ENCODE measurements at regions of chr19 and their contacts with region 1.

Region 1: DNA sequence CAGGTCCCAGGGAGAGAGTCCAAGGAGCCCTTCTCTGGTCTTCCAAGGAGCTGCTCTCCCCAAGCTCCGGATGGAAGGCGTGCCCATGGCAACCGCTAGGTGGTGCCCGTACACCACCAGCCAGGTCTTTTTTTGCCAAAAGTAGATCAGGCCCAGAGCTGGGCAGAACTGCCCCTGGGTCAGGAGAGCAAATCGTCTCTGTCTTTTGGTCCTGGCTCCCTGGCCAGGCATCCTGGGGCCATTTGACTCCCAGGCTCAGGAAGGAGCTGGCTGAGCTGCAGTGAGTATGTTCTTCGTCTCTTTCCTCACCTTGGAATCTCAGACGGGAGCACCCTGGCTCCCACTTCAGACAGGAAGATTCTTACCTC is 24.6 kb upstream of the BCL3 start:
- DNase-seq: peak; percentile 73
- ATAC-seq: peak; percentile 96
- H3K4me3 ChIP-seq: no peak overlapping the region
- H3K27ac ChIP-seq: 0 out of 2 replicates have a peak overlapping the region, but pooled peaks have one; percentile 10
- H3K4me1 ChIP-seq: peaks cover 15% of the 10 kb centered on the region
- H3K27me3 ChIP-seq: no peaks in the 10 kb centered on the region
- CTCF ChIP-seq: peak; percentile 97
- POLR2A ChIP-seq: no peak
- RAD21 ChIP-seq: peak; percentile 98

Region 2: GRCh38 chr19:44757735-44758505 is 34.0 kb after region 1 on chr19:
- CTCF ChIA-PET with region 1: interaction called, 11 read pairs
- POLR2A ChIA-PET with region 1: interaction called, 3 read pairs
- dilution Hi-C with region 1: no loop called
- in situ Hi-C with region 1: no loop called
- intact Hi-C with region 1: loop called (anchors 5 kb)
- DNase-seq: peak; percentile 63
- ATAC-seq: peak; percentile 8
- H3K4me3 ChIP-seq: peak overlapping the region; percentile 15
- H3K27ac ChIP-seq: peak overlapping the region; percentile 30
- H3K4me1 ChIP-seq: peaks cover 45% of the 10 kb centered on the region
- H3K27me3 ChIP-seq: no peaks in the 10 kb centered on the region
- CTCF ChIP-seq: 0 out of 2 replicates have a peak, but pooled peaks have one; percentile 15
- POLR2A ChIP-seq: no peak
- RAD21 ChIP-seq: no peak

Region 3: GRCh38 chr19:44764975-44765948 is 41.3 kb after region 1 on chr19:
- CTCF ChIA-PET with region 1: interaction called, 71 read pairs
- POLR2A ChIA-PET with region 1: no interaction called
- dilution Hi-C with region 1: no loop called
- in situ Hi-C with region 1: loop called (anchors 5 kb)
- intact Hi-C with region 1: loop called (anchors 1 kb)
- DNase-seq: no peak
- ATAC-seq: no peak
- H3K4me3 ChIP-seq: no peak overlapping the region
- H3K27ac ChIP-seq: no peak overlapping the region
- H3K4me1 ChIP-seq: peaks cover 3% of the 10 kb centered on the region
- H3K27me3 ChIP-seq: no peaks in the 10 kb centered on the region
- CTCF ChIP-seq: no peak
- POLR2A ChIP-seq: no peak
- RAD21 ChIP-seq: no peak

Region 4: DNA sequence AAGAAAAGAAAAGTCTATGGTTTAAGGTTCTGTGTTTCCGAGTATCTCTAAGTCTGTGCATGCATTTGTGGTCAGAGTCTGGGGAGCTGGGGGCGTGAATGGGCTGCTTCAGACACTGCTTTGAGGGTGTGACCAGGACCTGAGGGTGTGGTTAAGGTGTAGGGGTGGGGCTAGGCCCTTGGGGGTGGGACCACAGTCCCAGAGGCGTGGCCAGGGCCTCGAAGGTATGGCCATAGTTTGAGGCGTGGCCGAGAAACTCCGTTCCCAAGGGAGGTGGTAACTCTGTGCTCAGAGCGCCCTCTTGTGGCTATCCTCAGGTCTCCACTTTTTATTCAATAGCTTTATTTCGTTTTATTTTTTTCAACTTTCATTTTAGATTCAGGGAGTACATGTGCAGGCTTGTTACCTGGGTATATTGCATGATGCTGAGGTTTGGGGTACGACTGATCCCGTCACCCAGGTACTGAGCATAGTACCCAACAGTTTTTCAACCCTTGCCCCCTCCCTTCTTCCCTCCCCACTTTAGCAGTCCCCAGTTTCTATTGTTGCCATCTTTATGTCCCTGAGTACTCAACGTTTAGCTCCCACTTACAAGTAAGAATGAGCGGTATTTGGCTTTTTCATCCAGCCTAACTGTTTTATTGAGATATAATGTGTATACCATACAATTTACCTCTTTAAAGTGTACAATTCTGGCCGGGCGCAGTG is 46.8 kb after region 1 on chr19:
- CTCF ChIA-PET with region 1: interaction called, 71 read pairs
- POLR2A ChIA-PET with region 1: no interaction called
- dilution Hi-C with region 1: no loop called
- in situ Hi-C with region 1: loop called (anchors 5 kb)
- intact Hi-C with region 1: loop called (anchors 1 kb)
- DNase-seq: peak; percentile 91
- ATAC-seq: peak; percentile 93
- H3K4me3 ChIP-seq: no peak overlapping the region
- H3K27ac ChIP-seq: peak overlapping the region; percentile 59
- H3K4me1 ChIP-seq: peaks cover 12% of the 10 kb centered on the region
- H3K27me3 ChIP-seq: no peaks in the 10 kb centered on the region
- CTCF ChIP-seq: peak; percentile 95
- POLR2A ChIP-seq: no peak
- RAD21 ChIP-seq: peak; percentile 95

Measured in IMR-90 (cell line).